Activated naive CD4-positive, alpha-beta T cell treated with anti-CD3 and anti-CD28 coated beads for 36 hours (primary cell): ENCODE measurements at regions of chr2 and their contacts with region 1.

Region 1: DNA sequence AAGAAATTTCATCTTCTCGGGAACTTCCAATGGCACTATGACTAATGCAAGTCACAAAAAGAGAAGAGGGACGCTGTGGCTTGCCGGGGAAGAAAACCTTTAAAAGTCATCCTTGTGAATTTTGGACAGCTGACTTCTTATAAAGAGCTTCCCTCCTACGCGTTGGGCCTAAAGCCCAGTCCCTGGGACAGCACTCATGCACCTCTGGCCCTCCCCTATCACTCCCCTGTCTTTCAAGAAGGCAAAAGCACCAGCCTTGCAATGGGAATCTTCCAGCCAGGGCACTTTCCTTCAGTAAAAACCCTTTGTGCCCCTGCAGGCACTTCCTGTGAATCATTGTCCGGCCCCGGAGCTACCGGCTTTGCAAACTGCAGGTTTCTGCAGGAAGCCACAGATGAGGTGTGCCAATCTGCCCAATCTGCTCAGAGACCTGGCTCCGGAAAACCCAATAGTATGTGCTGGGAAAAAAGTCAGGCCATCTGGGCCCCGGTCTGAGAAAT is 7.1 kb downstream of the MREG start:
- DNase-seq: peak; percentile 71
- H3K4me3 Mint-ChIP-seq: peak overlapping the region; percentile 8
- H3K27ac Mint-ChIP-seq: peak overlapping the region; percentile 57
- H3K4me1 Mint-ChIP-seq: peaks cover 38% of the 10 kb centered on the region
- H3K27me3 Mint-ChIP-seq: no peaks in the 10 kb centered on the region

Region 2: GRCh38 chr2:215454519-215455246 is 551.5 kb before region 1 on chr2:
- CTCF ChIA-PET with region 1: no interaction called
- intact Hi-C with region 1: no loop called
- DNase-seq: no peak
- H3K4me3 Mint-ChIP-seq: no peak overlapping the region
- H3K27ac Mint-ChIP-seq: no peak overlapping the region
- H3K4me1 Mint-ChIP-seq: no peaks in the 10 kb centered on the region
- H3K27me3 Mint-ChIP-seq: peaks cover 8% of the 10 kb centered on the region

Region 3: GRCh38 chr2:215970425-215970824 is 35.8 kb before region 1 on chr2:
- CTCF ChIA-PET with region 1: interaction called, 3 read pairs
- intact Hi-C with region 1: loop called (anchors 2 kb)
- DNase-seq: peak; percentile 56
- H3K4me3 Mint-ChIP-seq: no peak overlapping the region
- H3K27ac Mint-ChIP-seq: peak overlapping the region; percentile 0
- H3K4me1 Mint-ChIP-seq: peaks cover 24% of the 10 kb centered on the region
- H3K27me3 Mint-ChIP-seq: no peaks in the 10 kb centered on the region

Region 4: DNA sequence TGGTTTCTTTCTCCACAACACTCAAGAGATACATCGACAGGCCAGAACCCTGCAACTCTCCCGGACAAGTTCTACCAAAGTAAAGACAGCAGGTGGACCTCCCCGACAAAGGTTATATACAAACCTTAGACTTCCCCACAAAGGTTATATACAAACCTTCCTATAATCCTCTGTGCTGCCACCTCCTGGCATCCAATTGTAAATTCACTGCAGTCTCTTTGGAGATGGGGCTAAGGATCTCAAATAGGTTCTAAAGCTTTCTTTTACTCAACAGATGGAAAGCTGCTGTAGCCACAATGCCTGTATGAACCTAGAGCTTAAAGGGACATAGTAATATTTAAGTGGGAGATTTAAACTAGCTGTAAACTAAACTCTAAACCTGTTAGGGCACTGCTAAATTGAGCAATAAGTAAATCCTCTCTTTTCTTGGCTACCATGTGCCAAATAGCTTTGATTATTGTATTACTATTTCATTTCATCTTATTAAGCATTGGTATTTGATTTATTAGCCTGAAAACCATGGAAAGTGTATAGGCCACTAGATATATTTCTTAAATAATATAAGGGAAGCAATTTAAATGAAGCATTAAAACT is 16.9 kb after region 1 on chr2:
- CTCF ChIA-PET with region 1: interaction called, 13 read pairs
- intact Hi-C with region 1: no loop called
- DNase-seq: peak; percentile 67
- H3K4me3 Mint-ChIP-seq: no peak overlapping the region
- H3K27ac Mint-ChIP-seq: no peak overlapping the region
- H3K4me1 Mint-ChIP-seq: peaks cover 1% of the 10 kb centered on the region
- H3K27me3 Mint-ChIP-seq: no peaks in the 10 kb centered on the region